Natural killer cell (primary cell): ENCODE measurements at regions of chr15 and their contacts with region 1.

Region 1: GRCh38 chr15:41465822-41466421 is 27.8 kb upstream of the ITPKA start:
- DNase-seq: peak in 1 of 2 donors; percentile 70
- ATAC-seq: peak; percentile 63 to 85 (median 78)
- H3K4me3 ChIP-seq: no peak overlapping the region
- H3K4me3 Mint-ChIP-seq: peak overlapping the region; percentile 75
- H3K27ac ChIP-seq: no peak overlapping the region
- H3K27ac Mint-ChIP-seq: peak overlapping the region; percentile 23 to 37
- H3K4me1 ChIP-seq: peaks cover 6% of the 10 kb centered on the region
- H3K4me1 Mint-ChIP-seq: peaks cover 18 to 23% of the 10 kb centered on the region in 2 donors
- H3K27me3 ChIP-seq: no peaks in the 10 kb centered on the region
- H3K27me3 Mint-ChIP-seq: no peaks in the 10 kb centered on the region
- CTCF ChIP-seq: peak; percentile 93

Region 2: DNA sequence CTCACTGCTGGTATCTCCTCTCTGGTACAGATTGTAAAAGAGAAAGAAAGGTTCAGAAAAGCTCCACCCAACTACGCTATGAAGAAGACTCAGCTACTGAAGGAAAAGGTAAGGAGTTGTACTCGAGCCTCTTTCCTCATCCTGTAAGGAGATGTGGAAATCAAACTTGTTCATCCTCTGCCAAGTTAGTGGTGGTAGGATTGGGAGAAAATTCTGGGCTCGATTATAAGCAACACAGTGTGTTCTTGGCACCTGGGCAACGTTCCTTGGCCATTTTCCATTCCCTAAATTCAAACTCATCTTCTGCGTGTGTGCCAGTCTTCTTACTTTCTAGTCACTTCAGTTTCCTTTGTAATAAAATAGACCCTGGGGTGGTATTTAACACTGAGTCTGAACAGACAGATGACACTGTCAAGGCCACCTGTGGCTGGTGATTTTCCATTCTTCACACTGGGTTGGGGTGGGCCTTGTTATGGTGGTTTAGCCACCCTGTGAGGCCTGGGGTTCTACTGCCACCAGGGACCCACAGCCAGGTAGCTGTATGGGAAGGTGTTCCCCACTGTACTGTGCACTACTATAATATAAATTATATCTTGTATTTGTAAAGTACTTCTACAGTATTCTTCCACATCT is 10.6 kb after region 1 on chr15:
- intact Hi-C with region 1: no loop called
- DNase-seq: no peak
- ATAC-seq: no peak
- H3K4me3 ChIP-seq: no peak overlapping the region
- H3K4me3 Mint-ChIP-seq: no peak overlapping the region
- H3K27ac ChIP-seq: no peak overlapping the region
- H3K27ac Mint-ChIP-seq: no peak overlapping the region
- H3K4me1 ChIP-seq: no peaks in the 10 kb centered on the region
- H3K4me1 Mint-ChIP-seq: no peaks in the 10 kb centered on the region
- H3K27me3 ChIP-seq: no peaks in the 10 kb centered on the region
- H3K27me3 Mint-ChIP-seq: no peaks in the 10 kb centered on the region
- CTCF ChIP-seq: no peak

Region 3: DNA sequence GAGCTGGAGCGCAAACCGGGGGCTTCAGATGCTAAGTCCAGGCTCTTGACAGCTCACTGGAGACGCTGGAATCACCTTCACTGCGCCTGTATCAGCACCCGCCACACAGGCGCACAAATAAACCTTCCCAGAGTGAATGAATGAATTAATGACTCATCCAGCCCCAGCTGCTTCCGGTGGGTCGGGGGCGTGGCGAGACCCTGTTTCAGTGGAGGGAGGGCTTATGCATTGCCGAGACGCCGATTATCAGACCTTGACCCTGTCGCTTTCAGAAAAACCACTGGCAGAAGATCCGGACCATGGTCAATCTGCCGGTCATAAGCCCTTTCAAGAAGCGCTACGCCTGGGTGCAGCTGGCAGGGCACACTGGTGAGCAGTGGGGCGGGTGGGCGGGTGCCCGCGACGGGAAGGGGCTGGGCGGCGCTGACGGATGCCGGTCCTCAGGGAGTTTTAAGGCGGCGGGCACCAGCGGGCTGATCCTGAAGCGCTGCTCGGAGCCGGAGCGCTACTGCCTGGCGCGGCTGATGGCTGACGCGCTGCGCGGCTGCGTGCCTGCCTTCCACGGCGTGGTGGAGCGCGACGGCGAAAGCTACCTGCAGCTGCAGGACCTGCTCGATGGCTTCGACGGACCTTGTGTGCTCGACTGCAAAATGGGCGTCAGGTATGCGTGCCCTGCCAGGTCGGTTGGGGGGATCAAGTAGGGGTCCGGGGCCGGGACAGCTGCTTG is 35.4 kb after region 1 on chr15:
- intact Hi-C with region 1: no loop called
- DNase-seq: peak in 1 of 2 donors; percentile 63
- ATAC-seq: peak in 2 of 3 donors; percentile 43 to 58
- H3K4me3 ChIP-seq: peak overlapping the region; percentile 24
- H3K4me3 Mint-ChIP-seq: peak overlapping the region; percentile 75
- H3K27ac ChIP-seq: no peak overlapping the region
- H3K27ac Mint-ChIP-seq: no peak overlapping the region
- H3K4me1 ChIP-seq: peaks cover 30% of the 10 kb centered on the region
- H3K4me1 Mint-ChIP-seq: peaks cover 0 to 29% of the 10 kb centered on the region in 2 donors
- H3K27me3 ChIP-seq: peaks cover 54% of the 10 kb centered on the region
- H3K27me3 Mint-ChIP-seq: peaks cover 28 to 49% of the 10 kb centered on the region in 2 donors
- CTCF ChIP-seq: no peak

Region 4: DNA sequence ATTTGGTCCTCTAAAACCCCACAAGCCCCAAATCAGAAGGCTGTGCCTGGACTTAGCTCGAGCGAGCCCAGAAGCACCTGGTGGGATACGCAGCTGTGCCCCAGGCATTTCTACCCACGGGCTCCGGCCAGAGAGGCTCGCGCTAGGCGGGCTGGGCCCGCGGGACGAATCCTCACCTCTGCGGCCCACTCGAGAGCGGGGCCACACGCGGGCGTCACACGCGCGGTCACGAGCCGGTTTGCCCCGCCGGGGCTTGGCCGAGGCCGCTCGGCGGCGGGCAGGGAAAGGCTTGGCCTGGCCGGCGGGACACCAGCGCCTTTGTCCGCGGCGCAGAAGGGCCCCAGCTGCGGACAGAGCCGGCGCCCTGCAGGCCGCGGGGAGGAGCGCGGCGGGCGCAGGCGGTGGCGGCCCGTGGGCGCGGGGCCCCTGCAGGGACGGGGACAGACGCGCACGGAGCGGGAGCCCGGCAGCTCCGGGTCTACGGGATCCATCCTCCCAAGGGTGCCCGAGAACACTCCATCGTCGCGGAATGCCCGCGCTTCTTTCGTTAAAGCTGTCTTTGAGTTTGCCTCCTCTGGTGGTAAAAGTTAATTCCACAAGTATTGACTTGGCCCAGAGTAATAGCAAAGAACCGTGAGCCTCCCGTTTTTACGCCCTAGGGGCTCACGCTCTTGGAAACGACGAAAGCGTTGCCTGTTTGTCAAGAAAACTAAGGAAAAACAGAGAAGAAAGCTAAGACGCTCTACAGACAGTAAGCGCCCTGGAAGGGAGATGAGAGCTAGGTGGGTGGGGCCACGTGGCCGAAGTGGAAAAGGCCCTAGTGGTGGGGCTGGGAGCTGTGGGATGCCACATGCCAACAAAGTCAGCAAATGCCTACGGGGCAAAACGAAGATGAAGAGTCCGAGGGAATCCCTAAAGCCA is 119.5 kb after region 1 on chr15:
- intact Hi-C with region 1: loop called (anchors 10 kb)
- DNase-seq: peak in 1 of 2 donors; percentile 48
- ATAC-seq: peak in 2 of 3 donors; percentile 54 to 73
- H3K4me3 ChIP-seq: no peak overlapping the region
- H3K4me3 Mint-ChIP-seq: peak overlapping the region; percentile 76
- H3K27ac ChIP-seq: no peak overlapping the region
- H3K27ac Mint-ChIP-seq: no peak overlapping the region
- H3K4me1 ChIP-seq: peaks cover 9% of the 10 kb centered on the region
- H3K4me1 Mint-ChIP-seq: peaks cover 10% of the 10 kb centered on the region in 2 donors
- H3K27me3 ChIP-seq: peaks cover 16% of the 10 kb centered on the region
- H3K27me3 Mint-ChIP-seq: peaks cover 30 to 33% of the 10 kb centered on the region in 2 donors
- CTCF ChIP-seq: peak; percentile 16

Region 5: DNA sequence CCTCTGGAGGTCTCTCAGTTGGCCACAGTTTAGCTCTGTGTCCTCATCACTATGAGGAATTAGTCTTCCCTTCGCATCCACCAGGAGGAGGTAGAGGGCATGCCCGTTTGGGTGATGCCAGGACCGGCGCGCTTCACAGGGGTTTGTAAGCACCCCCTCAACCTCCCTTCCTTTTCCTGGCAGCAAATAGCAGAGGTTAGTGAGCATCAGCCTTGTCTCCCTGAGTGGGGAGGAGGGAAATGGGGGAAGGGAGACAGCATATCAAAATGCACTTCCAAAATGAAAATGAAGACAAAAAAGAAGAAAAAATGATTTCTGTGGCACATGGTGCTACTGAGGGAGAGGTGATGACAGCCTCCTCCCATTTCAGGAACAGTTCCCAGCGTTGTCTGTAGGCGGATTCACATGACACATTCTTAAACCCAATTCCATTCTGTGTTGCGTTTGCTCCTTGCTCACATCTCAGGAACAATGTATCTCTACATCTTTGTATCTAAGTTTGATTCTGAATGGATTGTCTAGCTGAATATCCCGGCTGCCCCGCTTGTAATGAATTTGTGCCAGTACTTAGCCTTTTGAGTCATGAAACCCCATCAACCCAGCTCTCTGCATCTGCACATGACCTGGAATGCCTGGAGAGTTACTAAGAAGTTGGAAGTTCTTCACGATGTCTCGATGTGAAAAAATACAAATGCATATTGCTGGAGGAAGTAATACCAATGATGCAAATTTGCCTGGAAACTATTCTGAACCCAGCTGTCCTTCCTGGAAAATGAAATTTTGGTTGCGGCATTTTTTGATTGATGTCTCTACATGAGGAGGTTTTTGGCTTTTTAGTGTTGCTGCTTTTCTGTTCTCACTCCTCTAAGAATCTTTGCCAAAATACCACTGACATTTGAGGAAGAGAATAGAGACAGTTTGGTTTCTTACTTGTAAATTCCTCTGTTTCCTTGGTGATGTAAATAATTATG is 138.3 kb after region 1 on chr15:
- intact Hi-C with region 1: loop called (anchors 5 kb)
- DNase-seq: peak; percentile 30 to 79
- ATAC-seq: peak; percentile 80 to 96 (median 85)
- H3K4me3 ChIP-seq: no peak overlapping the region
- H3K4me3 Mint-ChIP-seq: no peak overlapping the region
- H3K27ac ChIP-seq: no peak overlapping the region
- H3K27ac Mint-ChIP-seq: no peak overlapping the region
- H3K4me1 ChIP-seq: peaks cover 7% of the 10 kb centered on the region
- H3K4me1 Mint-ChIP-seq: peaks cover 7 to 10% of the 10 kb centered on the region in 2 donors
- H3K27me3 ChIP-seq: no peaks in the 10 kb centered on the region
- H3K27me3 Mint-ChIP-seq: peaks cover 24 to 35% of the 10 kb centered on the region in 2 donors
- CTCF ChIP-seq: peak; percentile 66